Natural killer cell (primary cell): ENCODE measurements at regions of chr15 and their contacts with region 1.

Region 1: DNA sequence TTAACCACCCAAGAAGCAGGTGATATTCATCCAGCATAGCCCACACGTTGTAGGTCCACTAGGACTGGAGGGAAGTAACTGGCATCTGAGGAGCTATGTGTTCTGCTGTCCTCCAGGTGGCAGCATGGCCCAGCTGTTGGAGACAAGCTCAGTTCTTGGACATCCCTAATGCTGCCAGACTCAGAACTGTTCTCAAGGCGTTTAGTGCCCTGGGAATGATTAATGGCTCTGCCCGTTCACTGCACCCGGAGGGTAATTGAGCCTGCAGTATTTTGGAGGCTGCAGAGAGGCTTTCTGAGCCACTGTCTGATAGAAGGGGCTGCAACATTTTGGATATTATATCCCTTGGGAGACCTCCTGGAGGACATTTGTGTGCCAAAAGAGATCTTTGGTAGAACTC is 521.2 kb upstream of the SEMA6D start:
- DNase-seq: peak; percentile 23 to 55
- ATAC-seq: peak in 2 of 3 donors; percentile 50 to 81
- H3K4me3 ChIP-seq: no peak overlapping the region
- H3K4me3 Mint-ChIP-seq: no peak overlapping the region
- H3K27ac ChIP-seq: no peak overlapping the region
- H3K27ac Mint-ChIP-seq: no peak overlapping the region
- H3K4me1 ChIP-seq: no peaks in the 10 kb centered on the region
- H3K4me1 Mint-ChIP-seq: no peaks in the 10 kb centered on the region
- H3K27me3 ChIP-seq: no peaks in the 10 kb centered on the region
- H3K27me3 Mint-ChIP-seq: no peaks in the 10 kb centered on the region
- CTCF ChIP-seq: peak; percentile 46

Region 2: GRCh38 chr15:46556010-46556409 is 640.0 kb before region 1 on chr15:
- intact Hi-C with region 1: no loop called
- DNase-seq: no peak
- ATAC-seq: no peak
- H3K4me3 ChIP-seq: no peak overlapping the region
- H3K4me3 Mint-ChIP-seq: no peak overlapping the region
- H3K27ac ChIP-seq: no peak overlapping the region
- H3K27ac Mint-ChIP-seq: no peak overlapping the region
- H3K4me1 ChIP-seq: no peaks in the 10 kb centered on the region
- H3K4me1 Mint-ChIP-seq: no peaks in the 10 kb centered on the region
- H3K27me3 ChIP-seq: no peaks in the 10 kb centered on the region
- H3K27me3 Mint-ChIP-seq: no peaks in the 10 kb centered on the region
- CTCF ChIP-seq: no peak

Region 3: GRCh38 chr15:47177177-47177576 is 18.9 kb before region 1 on chr15:
- intact Hi-C with region 1: no loop called
- DNase-seq: no peak
- ATAC-seq: no peak
- H3K4me3 ChIP-seq: no peak overlapping the region
- H3K4me3 Mint-ChIP-seq: no peak overlapping the region
- H3K27ac ChIP-seq: no peak overlapping the region
- H3K27ac Mint-ChIP-seq: no peak overlapping the region
- H3K4me1 ChIP-seq: no peaks in the 10 kb centered on the region
- H3K4me1 Mint-ChIP-seq: no peaks in the 10 kb centered on the region
- H3K27me3 ChIP-seq: no peaks in the 10 kb centered on the region
- H3K27me3 Mint-ChIP-seq: peaks cover 3 to 9% of the 10 kb centered on the region in 2 donors
- CTCF ChIP-seq: no peak

Region 4: GRCh38 chr15:48352474-48353072 is 1156.5 kb after region 1 on chr15:
- intact Hi-C with region 1: loop called (anchors 1 kb)
- DNase-seq: peak in 1 of 2 donors; percentile 78
- ATAC-seq: peak; percentile 64 to 89 (median 80)
- H3K4me3 ChIP-seq: no peak overlapping the region
- H3K4me3 Mint-ChIP-seq: no peak overlapping the region
- H3K27ac ChIP-seq: no peak overlapping the region
- H3K27ac Mint-ChIP-seq: no peak overlapping the region
- H3K4me1 ChIP-seq: no peaks in the 10 kb centered on the region
- H3K4me1 Mint-ChIP-seq: peaks cover 0 to 7% of the 10 kb centered on the region in 2 donors
- H3K27me3 ChIP-seq: no peaks in the 10 kb centered on the region
- H3K27me3 Mint-ChIP-seq: peaks cover 0 to 9% of the 10 kb centered on the region in 2 donors
- CTCF ChIP-seq: peak; percentile 75